ENCODE measurements at regions of chr12 and their contacts with region 1.

Region 1: GRCh38 chr12:75692876-75693275 is 181.5 kb upstream of the KRR1 start:
- DNase-seq: no peak
- H3K4me3 ChIP-seq: no peak overlapping the region
- H3K27ac ChIP-seq: no peak overlapping the region
- H3K4me1 ChIP-seq: no peaks in the 10 kb centered on the region
- H3K27me3 ChIP-seq: no peaks in the 10 kb centered on the region
- CTCF ChIP-seq: no peak

Region 2: DNA sequence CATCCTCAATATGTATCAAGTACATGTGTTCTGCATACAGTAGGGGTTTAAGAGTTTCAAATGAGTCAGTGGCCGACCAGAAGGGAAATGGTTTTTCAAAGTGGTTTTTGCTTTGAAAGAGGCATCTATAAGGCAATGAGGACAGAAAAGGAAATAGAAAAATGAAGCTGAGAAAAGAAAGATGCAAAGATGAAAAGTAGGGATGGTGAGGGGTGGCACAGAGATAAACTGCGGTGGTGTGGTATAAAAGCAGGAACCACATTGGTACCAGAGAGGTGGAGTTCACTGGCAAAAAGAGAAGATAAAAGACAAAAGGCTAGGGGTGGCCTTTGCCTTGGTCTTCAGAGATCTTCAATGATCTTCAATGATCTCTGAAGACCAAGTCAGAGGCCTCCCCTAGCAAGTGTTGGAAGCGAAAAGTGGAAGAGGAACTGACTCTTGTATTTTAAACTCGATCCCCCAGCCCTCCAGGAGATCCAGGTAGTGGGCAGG is 37.5 kb before region 1 on chr12:
- intact Hi-C with region 1: loop called (anchors 2 kb)
- DNase-seq: no peak
- H3K4me3 ChIP-seq: no peak overlapping the region
- H3K27ac ChIP-seq: no peak overlapping the region
- H3K4me1 ChIP-seq: peaks cover 0 to 12% (median 0%) of the 10 kb centered on the region in 4 donors
- H3K27me3 ChIP-seq: no peaks in the 10 kb centered on the region
- CTCF ChIP-seq: no peak

Region 3: DNA sequence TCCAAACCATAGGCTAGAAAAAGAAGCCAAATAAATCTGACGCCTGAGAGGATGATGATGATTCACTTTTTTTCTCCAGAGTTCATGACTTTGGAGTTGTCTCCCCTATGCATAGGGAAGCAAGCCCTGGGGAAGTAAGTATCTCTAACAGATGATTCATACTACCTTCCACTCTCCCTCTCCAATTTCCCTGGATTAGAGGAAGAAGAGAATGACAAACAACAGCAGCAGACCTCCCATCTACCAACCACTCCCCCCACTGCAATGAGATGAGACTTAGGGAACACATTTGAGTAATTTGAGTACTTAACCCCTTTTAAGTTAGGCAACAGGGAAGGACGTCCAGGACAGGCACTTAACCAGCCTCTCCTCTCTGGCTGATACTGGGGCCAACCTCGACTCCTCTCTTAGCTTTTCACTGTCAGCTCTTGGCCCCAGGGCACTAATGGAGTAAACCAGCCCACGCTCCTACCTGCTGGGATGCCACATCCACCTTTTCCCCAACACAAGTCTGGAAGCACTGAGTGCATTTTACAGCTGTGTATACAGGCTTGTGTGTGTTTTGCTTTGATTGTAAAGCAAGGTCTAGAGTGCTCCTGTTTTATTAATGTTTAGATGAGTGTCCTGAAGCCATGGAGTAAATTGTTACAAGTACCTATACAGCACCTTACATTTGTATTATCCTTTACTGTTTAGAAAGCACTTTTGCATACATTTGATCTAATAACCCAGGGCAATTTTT is 158.0 kb after region 1 on chr12:
- intact Hi-C with region 1: no loop called
- DNase-seq: no peak
- H3K4me3 ChIP-seq: no peak overlapping the region
- H3K27ac ChIP-seq: no peak overlapping the region
- H3K4me1 ChIP-seq: peaks cover 0 to 4% (median 0%) of the 10 kb centered on the region in 4 donors
- H3K27me3 ChIP-seq: no peaks in the 10 kb centered on the region
- CTCF ChIP-seq: no peak